CD4-positive, alpha-beta T cell (primary cell): ENCODE measurements at regions of chr20 and their contacts with region 1.

Region 1: GRCh38 chr20:64062596-64063388 is at the start of gene TCEA2:
- DNase-seq: peak; percentile 86 to 96 (median 94)
- ATAC-seq: peak; percentile 90
- H3K4me3 ChIP-seq: peak within 1 kb of the TSS; percentile 56
- H3K4me3 Mint-ChIP-seq: peak within 1 kb of the TSS; percentile 85
- H3K27ac ChIP-seq: peak within 1 kb of the TSS in 1 of 2 donors; percentile 22
- H3K27ac Mint-ChIP-seq: peak within 1 kb of the TSS; percentile 48
- H3K4me1 ChIP-seq: peaks cover 58% of the 10 kb centered on the region
- H3K4me1 Mint-ChIP-seq: peaks cover 41% of the 10 kb centered on the region
- H3K27me3 ChIP-seq: no peaks in the 10 kb centered on the region
- H3K27me3 Mint-ChIP-seq: no peaks in the 10 kb centered on the region
- CTCF ChIP-seq: no peak
- total RNA-seq, gene TCEA2: 28.4 to 29.9 TPM

Region 2: GRCh38 chr20:63657937-63658748 is 404.6 kb before region 1 on chr20 and contains the start of gene RTEL1:
- CTCF ChIA-PET with region 1: no interaction called
- POLR2A ChIA-PET with region 1: no interaction called
- intact Hi-C with region 1: loop called in 1 of 2 experiments (anchors 10 kb)
- DNase-seq: peak; percentile 77 to 93 (median 86)
- ATAC-seq: peak; percentile 83
- H3K4me3 ChIP-seq: peak within 1 kb of the TSS; percentile 76
- H3K4me3 Mint-ChIP-seq: peak within 1 kb of the TSS; percentile 98
- H3K27ac ChIP-seq: peak within 1 kb of the TSS; percentile 56 to 87
- H3K27ac Mint-ChIP-seq: peak within 1 kb of the TSS; percentile 96
- H3K4me1 ChIP-seq: peaks cover 47% of the 10 kb centered on the region
- H3K4me1 Mint-ChIP-seq: peaks cover 38% of the 10 kb centered on the region
- H3K27me3 ChIP-seq: no peaks in the 10 kb centered on the region
- H3K27me3 Mint-ChIP-seq: no peaks in the 10 kb centered on the region
- CTCF ChIP-seq: no peak
- total RNA-seq, gene RTEL1: 25.5 to 27.6 TPM

Region 3: DNA sequence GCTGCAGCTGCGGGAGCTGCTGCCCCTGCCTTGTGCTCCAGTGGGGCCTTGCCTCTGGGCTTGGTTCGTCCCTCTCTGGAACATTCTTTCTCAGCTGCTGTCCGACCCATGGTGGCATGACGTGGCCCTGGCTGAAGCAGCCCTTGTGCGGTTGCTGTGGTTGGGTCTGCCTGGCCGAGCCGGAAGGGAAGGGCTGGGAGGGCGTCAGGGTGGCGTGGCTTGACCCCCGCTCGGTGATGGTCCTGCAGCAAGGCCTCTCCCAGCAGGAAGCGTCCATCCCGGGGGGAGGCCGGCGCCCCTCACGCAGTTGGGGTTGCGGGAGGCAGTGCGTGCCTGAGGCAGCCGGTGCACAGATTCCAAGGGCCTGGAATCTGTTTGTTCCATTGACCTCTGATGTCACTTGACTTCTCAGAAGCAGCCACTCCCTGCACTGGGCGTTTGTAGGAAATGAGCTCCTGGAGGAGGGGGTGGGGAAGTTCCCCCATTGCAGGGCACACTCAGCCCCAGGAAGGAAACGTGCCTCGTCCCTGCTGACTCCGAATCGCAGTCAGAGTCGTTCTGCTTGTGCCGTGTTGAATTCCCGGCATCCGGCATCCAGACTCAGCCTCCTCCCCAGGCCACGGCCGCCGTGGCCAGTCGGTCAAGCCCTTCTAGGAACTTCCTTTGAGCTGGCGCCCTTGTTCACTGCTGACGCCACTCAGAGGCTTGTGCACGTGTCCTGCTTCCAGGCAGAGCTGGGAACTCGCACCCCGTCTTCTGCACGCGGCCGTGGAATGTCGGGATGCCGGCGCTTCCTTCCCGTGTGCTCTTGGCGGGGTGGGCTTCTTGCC is 376.1 kb before region 1 on chr20:
- CTCF ChIA-PET with region 1: no interaction called
- POLR2A ChIA-PET with region 1: no interaction called
- intact Hi-C with region 1: no loop called
- DNase-seq: peak in 4 of 14 experiments; percentile 31 to 77 (median 58)
- ATAC-seq: peak; percentile 68
- H3K4me3 ChIP-seq: no peak overlapping the region
- H3K4me3 Mint-ChIP-seq: no peak overlapping the region
- H3K27ac ChIP-seq: no peak overlapping the region
- H3K27ac Mint-ChIP-seq: no peak overlapping the region
- H3K4me1 ChIP-seq: peaks cover 24% of the 10 kb centered on the region
- H3K4me1 Mint-ChIP-seq: no peaks in the 10 kb centered on the region
- H3K27me3 ChIP-seq: no peaks in the 10 kb centered on the region
- H3K27me3 Mint-ChIP-seq: no peaks in the 10 kb centered on the region
- CTCF ChIP-seq: no peak

Region 4: DNA sequence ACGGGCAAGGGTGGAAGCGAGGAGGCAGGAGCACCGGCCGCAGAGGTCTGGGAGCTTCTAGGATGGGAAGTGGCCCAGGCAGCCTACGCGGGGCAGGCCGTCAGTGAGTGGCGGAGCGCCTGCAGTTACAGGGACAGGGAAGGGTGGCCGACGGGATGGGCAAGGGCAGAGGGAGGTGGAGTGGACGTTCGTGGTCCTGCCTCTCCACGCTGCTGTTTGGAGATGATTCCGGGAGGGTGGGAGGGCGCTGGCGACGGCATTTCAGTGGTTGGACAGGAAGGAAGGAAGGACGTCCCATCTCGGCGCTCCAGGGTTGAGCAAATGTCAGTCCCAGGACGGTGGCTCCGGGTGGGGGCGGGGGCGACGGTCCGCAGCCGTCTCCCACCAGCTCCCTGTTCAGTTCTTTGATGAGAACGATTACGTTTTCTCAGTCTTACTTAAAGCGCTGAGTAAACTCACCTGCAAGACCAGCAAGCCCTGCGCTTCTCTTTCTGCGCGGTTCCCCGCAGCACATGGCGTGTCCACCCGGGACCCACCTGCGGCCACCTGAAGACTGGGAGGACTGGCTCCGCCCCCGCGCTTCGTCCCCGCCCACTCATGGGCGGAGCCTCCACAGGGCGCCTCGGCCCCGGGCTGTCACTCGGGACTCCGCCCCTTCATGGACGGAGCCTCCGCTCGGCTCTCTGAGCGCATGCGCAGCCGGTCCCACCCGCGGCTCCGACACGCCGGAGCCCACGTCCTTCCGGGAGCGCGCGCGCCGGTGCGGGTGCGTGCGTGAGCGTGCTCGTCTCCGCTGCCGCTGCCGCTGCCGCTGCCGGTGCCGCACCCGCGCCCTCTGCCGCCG is 168.2 kb before region 1 on chr20 and contains the start of gene DNAJC5:
- CTCF ChIA-PET with region 1: no interaction called
- POLR2A ChIA-PET with region 1: no interaction called
- intact Hi-C with region 1: loop called in 1 of 2 experiments (anchors 1 kb)
- DNase-seq: peak; percentile 94 to 99 (median 98)
- ATAC-seq: peak; percentile 88
- H3K4me3 ChIP-seq: peak within 1 kb of the TSS; percentile 61
- H3K4me3 Mint-ChIP-seq: peak within 1 kb of the TSS; percentile 99
- H3K27ac ChIP-seq: peak within 1 kb of the TSS; percentile 59 to 75
- H3K27ac Mint-ChIP-seq: peak within 1 kb of the TSS; percentile 93
- H3K4me1 ChIP-seq: peaks cover 41% of the 10 kb centered on the region
- H3K4me1 Mint-ChIP-seq: peaks cover 47% of the 10 kb centered on the region
- H3K27me3 ChIP-seq: no peaks in the 10 kb centered on the region
- H3K27me3 Mint-ChIP-seq: no peaks in the 10 kb centered on the region
- CTCF ChIP-seq: no peak
- total RNA-seq, gene DNAJC5: 21.4 to 22.5 TPM

Region 5: DNA sequence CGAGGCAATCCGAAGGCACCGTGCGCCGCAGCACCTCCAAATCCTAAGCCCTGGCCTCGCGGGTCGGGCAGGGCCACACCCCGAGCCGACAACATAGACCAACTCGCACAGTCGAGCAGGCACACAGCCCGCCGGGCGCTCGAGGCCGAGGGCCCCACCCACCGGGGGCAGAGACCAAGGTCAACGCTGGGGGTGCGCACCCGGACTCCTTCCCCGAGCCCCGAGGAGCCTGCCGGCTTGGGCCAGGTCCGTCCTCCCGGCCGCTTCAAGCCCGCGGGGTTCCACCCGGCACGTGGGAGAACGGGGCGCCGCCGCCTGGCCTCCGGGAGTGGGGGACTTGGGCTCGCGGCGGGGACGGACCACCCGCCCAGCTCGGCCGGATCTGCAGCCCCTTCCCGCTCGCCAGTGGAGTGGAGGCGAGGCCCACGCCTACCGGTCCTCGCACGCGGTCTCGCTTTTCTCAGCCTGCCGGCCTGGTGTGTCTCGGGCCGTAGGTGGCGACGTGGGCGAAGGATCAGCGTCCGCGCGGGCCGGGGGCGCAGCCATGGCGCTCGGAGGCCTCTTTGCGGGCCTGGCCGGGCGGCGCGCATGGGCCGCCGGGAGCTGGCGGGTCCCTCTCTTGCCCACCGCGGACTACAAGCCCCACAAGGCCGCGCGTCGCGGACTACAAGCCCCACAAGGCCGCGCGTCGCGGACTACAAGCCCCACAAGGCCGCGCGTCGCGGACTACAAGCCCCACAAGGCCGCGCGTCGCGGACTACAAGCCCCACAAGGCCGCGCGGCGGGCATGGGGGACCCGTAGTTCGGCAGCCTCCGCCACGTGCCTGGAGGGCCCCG is 106.7 kb before region 1 on chr20 and contains the start of gene UCKL1:
- CTCF ChIA-PET with region 1: no interaction called
- POLR2A ChIA-PET with region 1: interaction called, 4 read pairs
- intact Hi-C with region 1: loop called in 1 of 2 experiments (anchors 2 kb)
- DNase-seq: peak; percentile 81 to 95 (median 88)
- ATAC-seq: peak; percentile 79
- H3K4me3 ChIP-seq: peak within 1 kb of the TSS; percentile 77
- H3K4me3 Mint-ChIP-seq: peak within 1 kb of the TSS; percentile 87
- H3K27ac ChIP-seq: peak within 1 kb of the TSS; percentile 45 to 69
- H3K27ac Mint-ChIP-seq: peak within 1 kb of the TSS; percentile 82
- H3K4me1 ChIP-seq: peaks cover 59% of the 10 kb centered on the region
- H3K4me1 Mint-ChIP-seq: peaks cover 37% of the 10 kb centered on the region
- H3K27me3 ChIP-seq: no peaks in the 10 kb centered on the region
- H3K27me3 Mint-ChIP-seq: no peaks in the 10 kb centered on the region
- CTCF ChIP-seq: no peak
- total RNA-seq, gene UCKL1: 41.3 to 46.1 TPM

Region 6: DNA sequence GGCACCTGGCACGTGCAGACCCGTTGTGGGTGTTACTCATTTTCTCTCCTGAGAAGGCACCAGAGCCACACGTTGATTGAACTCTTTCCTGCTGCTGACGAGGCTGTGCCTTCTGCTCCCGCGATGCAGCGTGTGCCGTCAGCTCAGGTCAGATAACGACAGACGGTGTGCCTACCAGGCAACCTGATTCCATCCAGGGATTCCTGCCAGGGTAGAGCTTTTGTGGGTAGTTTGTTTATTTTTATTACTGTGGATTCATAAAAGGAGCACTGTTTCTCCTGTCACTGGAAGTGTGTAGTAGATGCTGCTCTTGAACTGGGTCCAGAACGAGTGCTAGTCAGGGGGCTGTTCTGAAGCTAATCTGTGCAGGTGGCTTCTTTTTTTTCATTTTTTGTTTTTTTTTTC is 61.2 kb before region 1 on chr20:
- CTCF ChIA-PET with region 1: no interaction called
- POLR2A ChIA-PET with region 1: no interaction called
- intact Hi-C with region 1: no loop called
- DNase-seq: no peak
- ATAC-seq: no peak
- H3K4me3 ChIP-seq: no peak overlapping the region
- H3K4me3 Mint-ChIP-seq: no peak overlapping the region
- H3K27ac ChIP-seq: no peak overlapping the region
- H3K27ac Mint-ChIP-seq: no peak overlapping the region
- H3K4me1 ChIP-seq: no peaks in the 10 kb centered on the region
- H3K4me1 Mint-ChIP-seq: peaks cover 10% of the 10 kb centered on the region
- H3K27me3 ChIP-seq: no peaks in the 10 kb centered on the region
- H3K27me3 Mint-ChIP-seq: no peaks in the 10 kb centered on the region
- CTCF ChIP-seq: no peak

Region 7: DNA sequence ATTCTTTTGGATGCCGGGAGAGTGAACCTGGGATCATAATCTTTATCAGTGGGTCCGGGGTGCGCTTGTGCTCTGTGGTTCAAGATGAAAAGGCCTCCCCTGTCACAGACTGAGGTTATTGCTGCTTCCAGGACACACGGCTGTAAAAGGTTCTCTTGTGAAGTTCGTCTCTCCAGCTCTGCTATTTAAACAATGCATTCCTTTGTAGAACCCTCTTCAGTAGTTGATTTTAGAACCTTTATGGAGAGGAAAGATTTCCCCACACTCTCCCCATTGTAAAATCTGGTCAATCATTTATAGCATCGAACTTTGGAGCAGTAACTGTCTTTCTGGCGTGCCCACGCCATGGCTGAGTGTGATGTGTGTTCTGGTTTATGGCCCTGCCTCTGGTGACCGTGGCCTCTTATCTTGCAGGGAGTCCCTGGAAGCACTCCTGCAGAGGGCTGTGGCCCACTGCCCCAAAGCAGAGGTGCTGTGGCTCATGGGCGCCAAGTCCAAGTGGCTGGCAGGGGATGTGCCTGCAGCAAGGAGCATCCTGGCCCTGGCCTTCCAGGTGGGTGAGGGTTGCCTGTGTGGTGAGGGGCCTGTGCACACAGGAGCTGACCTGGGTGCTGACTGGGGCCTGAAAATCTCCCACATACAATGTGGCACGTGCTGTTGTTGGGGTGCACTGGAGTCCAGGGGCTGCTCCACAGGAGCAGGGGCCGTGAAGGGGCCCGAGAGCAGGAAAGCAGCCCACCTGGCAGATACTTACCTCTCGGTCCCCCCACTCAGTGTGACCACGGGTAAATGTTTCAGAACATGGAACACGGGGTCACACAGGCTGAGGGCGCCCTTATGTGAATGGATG is 38.4 kb before region 1 on chr20:
- CTCF ChIA-PET with region 1: no interaction called
- POLR2A ChIA-PET with region 1: no interaction called
- intact Hi-C with region 1: no loop called
- DNase-seq: no peak
- ATAC-seq: no peak
- H3K4me3 ChIP-seq: no peak overlapping the region
- H3K4me3 Mint-ChIP-seq: no peak overlapping the region
- H3K27ac ChIP-seq: no peak overlapping the region
- H3K27ac Mint-ChIP-seq: no peak overlapping the region
- H3K4me1 ChIP-seq: no peaks in the 10 kb centered on the region
- H3K4me1 Mint-ChIP-seq: no peaks in the 10 kb centered on the region
- H3K27me3 ChIP-seq: no peaks in the 10 kb centered on the region
- H3K27me3 Mint-ChIP-seq: no peaks in the 10 kb centered on the region
- CTCF ChIP-seq: no peak

Region 8: DNA sequence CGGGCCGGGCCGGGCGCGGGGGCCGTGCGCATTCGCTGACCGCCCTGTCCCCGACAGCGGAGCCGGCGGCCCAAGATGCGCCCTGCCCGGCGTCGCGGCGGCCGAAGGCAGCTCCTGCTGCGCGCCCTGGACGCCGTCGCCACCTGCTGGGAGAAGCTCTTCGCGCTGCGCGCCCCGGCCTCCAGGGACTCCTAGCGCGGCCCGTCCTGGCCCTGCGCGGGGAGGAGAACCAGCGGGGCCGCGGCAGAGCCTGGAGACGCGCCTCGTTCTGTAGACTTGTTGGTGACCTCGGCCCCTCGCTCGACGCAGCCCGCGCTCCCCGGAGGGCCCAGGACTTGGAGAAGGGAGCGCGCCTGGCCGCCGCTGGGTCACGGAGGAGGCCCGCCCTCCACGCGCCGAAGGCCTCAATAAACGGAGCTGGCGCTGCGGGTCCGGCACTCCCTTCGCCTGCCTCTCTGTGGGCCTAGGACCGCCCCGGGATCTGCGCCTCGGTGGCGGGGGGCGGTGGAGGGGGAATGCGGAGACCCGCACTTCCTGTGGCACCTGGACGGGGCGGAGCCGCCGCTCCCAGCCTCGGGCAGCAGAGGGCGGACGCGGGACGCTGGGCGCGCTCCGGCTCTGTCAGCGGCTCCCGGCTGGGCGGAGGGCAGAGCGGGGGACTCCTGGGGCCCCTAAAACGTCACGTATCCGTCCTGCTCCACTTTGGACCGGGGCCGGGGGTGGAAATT is 24.1 kb before region 1 on chr20:
- CTCF ChIA-PET with region 1: interaction called, 19 read pairs
- POLR2A ChIA-PET with region 1: interaction called, 14 read pairs
- intact Hi-C with region 1: loop called in 1 of 2 experiments (anchors 1 kb)
- DNase-seq: peak; percentile 61 to 88 (median 78)
- ATAC-seq: peak; percentile 82
- H3K4me3 ChIP-seq: peak overlapping the region; percentile 49
- H3K4me3 Mint-ChIP-seq: peak overlapping the region; percentile 75
- H3K27ac ChIP-seq: peak overlapping the region in 1 of 2 donors; percentile 13
- H3K27ac Mint-ChIP-seq: no peak overlapping the region
- H3K4me1 ChIP-seq: peaks cover 85% of the 10 kb centered on the region
- H3K4me1 Mint-ChIP-seq: peaks cover 39% of the 10 kb centered on the region
- H3K27me3 ChIP-seq: peaks cover 0 to 4% of the 10 kb centered on the region in 2 experiments
- H3K27me3 Mint-ChIP-seq: no peaks in the 10 kb centered on the region
- CTCF ChIP-seq: peak; percentile 93